Gastrocnemius medialis (tissue), 4 donors: ENCODE measurements at regions of chr4 and their contacts with region 1.

Region 1: DNA sequence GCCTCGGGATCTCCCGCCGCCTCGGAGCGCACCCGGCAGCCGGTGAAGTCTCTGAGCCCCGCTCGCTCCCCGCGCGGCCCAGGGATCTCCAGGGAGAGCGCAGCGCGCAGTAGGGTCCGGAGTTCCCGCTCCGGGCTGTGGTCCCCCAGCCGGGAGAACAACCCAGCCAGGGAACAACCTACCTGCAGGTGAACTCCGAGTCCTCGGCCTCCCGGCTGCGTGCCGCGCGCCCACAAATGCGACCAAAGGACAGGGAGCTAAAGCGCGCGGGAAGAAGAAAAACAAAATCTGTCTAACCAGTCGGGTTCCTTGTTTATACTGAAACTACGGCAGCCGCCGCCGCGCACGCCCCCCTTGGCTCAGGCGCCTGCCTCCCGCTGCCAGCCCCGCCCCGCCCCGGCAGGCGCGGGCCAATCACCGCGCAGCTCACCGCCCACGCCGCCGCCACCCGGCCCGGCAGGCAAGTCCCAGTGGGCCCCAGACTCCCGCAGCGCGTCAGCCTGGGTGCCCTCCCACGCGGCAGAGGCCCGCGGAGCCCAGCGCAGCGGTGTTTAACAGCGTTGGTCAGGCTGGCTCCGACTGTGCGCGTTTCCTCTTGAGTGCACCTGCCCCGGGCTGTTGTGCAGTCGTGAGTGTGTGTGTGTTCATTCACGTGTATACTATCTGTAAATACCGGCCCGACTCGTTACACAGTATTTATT is at the start of gene RASGEF1B:
- DNase-seq: peak; percentile 71 to 77
- ATAC-seq: peak; percentile 81 to 82
- H3K4me3 ChIP-seq: peak within 1 kb of the TSS; percentile 85 to 99 (median 88)
- H3K27ac ChIP-seq: peak within 1 kb of the TSS; percentile 87 to 90 (median 88)
- H3K4me1 ChIP-seq: peaks cover 0 to 13% of the 10 kb centered on the region in 2 donors
- H3K27me3 ChIP-seq: no peaks in the 10 kb centered on the region
- CTCF ChIP-seq: peak in 1 of 5 experiments; percentile 14
- POLR2A ChIP-seq: peak; percentile 67 to 89
- total RNA-seq, gene RASGEF1B: 1.9 to 6.0 (median 5.2) TPM

Region 2: GRCh38 chr4:81326581-81326980 is 145.2 kb before region 1 on chr4:
- in situ Hi-C with region 1: no loop called
- intact Hi-C with region 1: no loop called
- DNase-seq: no peak
- ATAC-seq: no peak
- H3K4me3 ChIP-seq: no peak overlapping the region
- H3K27ac ChIP-seq: no peak overlapping the region
- H3K4me1 ChIP-seq: no peaks in the 10 kb centered on the region
- H3K27me3 ChIP-seq: no peaks in the 10 kb centered on the region
- CTCF ChIP-seq: no peak
- POLR2A ChIP-seq: no peak

Region 3: DNA sequence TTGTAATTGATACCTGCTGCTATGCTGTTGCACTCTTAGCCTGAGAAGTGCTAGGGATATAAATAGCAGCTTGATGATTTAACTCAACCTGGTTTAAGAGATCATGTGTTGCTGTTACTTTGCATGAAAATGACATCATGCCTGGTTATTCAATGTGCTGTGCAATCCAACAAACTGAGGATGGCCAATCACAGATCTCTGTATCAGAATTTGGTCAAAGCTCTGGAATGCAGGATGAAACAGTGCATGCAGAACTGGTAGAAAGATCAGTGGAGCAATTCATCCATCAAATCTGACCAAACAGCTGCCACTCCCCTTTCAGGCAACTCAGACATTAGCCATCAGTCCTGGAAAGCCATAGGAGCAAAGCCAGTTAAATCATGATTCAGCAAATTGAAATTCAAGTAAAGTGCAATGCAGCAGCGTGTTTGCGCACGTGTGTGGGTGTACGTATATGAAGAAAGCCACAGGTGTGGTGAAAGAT is 160.3 kb after region 1 on chr4:
- in situ Hi-C with region 1: no loop called
- intact Hi-C with region 1: loop called (anchors 10 kb)
- DNase-seq: peak in 1 of 2 donors; percentile 6
- ATAC-seq: peak; percentile 91 to 97
- H3K4me3 ChIP-seq: no peak overlapping the region
- H3K27ac ChIP-seq: peak overlapping the region; percentile 16 to 61 (median 58)
- H3K4me1 ChIP-seq: peaks cover 17% of the 10 kb centered on the region in 2 donors
- H3K27me3 ChIP-seq: no peaks in the 10 kb centered on the region
- CTCF ChIP-seq: no peak
- POLR2A ChIP-seq: no peak

Region 4: GRCh38 chr4:81839347-81840042 is 367.8 kb after region 1 on chr4:
- in situ Hi-C with region 1: loop called (anchors 5 to 10 kb)
- intact Hi-C with region 1: loop called (anchors 1 kb)
- DNase-seq: no peak
- ATAC-seq: no peak
- H3K4me3 ChIP-seq: no peak overlapping the region
- H3K27ac ChIP-seq: no peak overlapping the region
- H3K4me1 ChIP-seq: no peaks in the 10 kb centered on the region
- H3K27me3 ChIP-seq: no peaks in the 10 kb centered on the region
- CTCF ChIP-seq: no peak
- POLR2A ChIP-seq: no peak

Region 5: GRCh38 chr4:82268050-82268825 is 796.5 kb after region 1 on chr4:
- in situ Hi-C with region 1: loop called in 1 of 4 experiments (anchors 25 kb)
- intact Hi-C with region 1: loop called (anchors 2 kb)
- DNase-seq: peak; percentile 12 to 19
- ATAC-seq: peak; percentile 76 to 84
- H3K4me3 ChIP-seq: no peak overlapping the region
- H3K27ac ChIP-seq: no peak overlapping the region
- H3K4me1 ChIP-seq: no peaks in the 10 kb centered on the region
- H3K27me3 ChIP-seq: no peaks in the 10 kb centered on the region
- CTCF ChIP-seq: peak in 4 of 5 experiments; percentile 21 to 63 (median 46)
- POLR2A ChIP-seq: no peak

Region 6: DNA sequence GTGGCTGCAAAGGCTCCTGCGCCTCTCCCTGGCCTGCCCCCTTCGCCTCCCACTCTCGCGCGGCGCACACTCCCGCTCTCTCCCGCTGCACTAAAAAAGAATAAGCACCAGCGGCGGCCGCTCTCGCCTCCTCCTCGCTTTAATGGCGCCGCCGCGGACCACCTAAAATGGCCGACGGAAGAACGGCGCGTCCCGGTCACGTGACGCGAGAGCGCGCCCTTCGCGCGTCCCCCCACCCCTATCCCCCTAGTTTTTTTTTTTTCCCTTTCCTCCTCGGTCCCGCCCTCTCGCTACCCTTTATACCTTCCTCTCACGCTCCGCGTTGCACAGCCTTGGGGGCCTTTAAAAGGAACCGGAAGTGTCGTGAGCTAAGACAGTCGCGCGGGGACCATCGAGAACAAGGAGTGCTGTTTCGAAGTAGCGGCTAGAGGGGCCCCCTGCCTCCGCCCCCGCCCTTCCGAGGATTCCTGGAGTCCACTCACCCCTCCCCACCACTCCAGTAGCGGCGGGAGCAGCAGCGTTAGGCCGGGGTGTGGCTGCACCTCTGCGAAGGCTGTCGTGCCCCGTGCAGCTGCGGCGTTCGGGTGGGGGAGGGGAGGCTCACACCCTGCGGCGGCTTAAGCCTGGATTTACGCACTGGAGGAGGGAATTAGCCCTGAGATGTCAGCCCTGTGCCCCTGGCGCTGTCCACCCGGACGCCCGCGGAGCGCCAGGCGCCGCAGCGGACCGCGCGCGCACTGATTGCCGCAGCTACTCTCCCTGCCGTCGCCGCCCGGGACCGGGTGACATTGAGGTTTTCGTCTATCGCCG is 902.3 kb after region 1 on chr4 and contains the start of gene HNRNPD:
- in situ Hi-C with region 1: no loop called
- intact Hi-C with region 1: loop called (anchors 5 kb)
- DNase-seq: peak; percentile 97 to 99
- ATAC-seq: peak; percentile 90 to 91
- H3K4me3 ChIP-seq: peak within 1 kb of the TSS; percentile 82 to 99 (median 96)
- H3K27ac ChIP-seq: peak within 1 kb of the TSS; percentile 99 to 100 (median 100)
- H3K4me1 ChIP-seq: peaks cover 42 to 44% of the 10 kb centered on the region in 2 donors
- H3K27me3 ChIP-seq: no peaks in the 10 kb centered on the region
- CTCF ChIP-seq: peak in 2 of 5 experiments; percentile 20 to 21
- POLR2A ChIP-seq: peak; percentile 92 to 95
- total RNA-seq, gene HNRNPD: 26.9 to 46.0 (median 37.4) TPM